HepG2 (cell line): ENCODE measurements at regions of chr11 and their contacts with region 1.

Region 1: GRCh38 chr11:8911029-8911826 is at the start of gene AKIP1:
- DNase-seq: peak; percentile 93
- ATAC-seq: peak; percentile 94
- H3K4me3 ChIP-seq: peak within 1 kb of the TSS; percentile 82 to 92 (median 91)
- H3K27ac ChIP-seq: peak within 1 kb of the TSS; percentile 81
- H3K4me1 ChIP-seq: peaks cover 44% of the 10 kb centered on the region
- H3K27me3 ChIP-seq: no peaks in the 10 kb centered on the region; a peak in 1 of 5 replicates
- CTCF ChIP-seq: peak; percentile 10; the same call in 1 of the 2 replicates
- EP300 ChIP-seq: no peak
- POLR2A ChIP-seq: peak; percentile 27 to 82; a peak in 2 of 4 replicates
- RAD21 ChIP-seq: no peak
- total RNA-seq, gene AKIP1: 20.3 and 21.6 TPM in 2 replicates

Region 2: DNA sequence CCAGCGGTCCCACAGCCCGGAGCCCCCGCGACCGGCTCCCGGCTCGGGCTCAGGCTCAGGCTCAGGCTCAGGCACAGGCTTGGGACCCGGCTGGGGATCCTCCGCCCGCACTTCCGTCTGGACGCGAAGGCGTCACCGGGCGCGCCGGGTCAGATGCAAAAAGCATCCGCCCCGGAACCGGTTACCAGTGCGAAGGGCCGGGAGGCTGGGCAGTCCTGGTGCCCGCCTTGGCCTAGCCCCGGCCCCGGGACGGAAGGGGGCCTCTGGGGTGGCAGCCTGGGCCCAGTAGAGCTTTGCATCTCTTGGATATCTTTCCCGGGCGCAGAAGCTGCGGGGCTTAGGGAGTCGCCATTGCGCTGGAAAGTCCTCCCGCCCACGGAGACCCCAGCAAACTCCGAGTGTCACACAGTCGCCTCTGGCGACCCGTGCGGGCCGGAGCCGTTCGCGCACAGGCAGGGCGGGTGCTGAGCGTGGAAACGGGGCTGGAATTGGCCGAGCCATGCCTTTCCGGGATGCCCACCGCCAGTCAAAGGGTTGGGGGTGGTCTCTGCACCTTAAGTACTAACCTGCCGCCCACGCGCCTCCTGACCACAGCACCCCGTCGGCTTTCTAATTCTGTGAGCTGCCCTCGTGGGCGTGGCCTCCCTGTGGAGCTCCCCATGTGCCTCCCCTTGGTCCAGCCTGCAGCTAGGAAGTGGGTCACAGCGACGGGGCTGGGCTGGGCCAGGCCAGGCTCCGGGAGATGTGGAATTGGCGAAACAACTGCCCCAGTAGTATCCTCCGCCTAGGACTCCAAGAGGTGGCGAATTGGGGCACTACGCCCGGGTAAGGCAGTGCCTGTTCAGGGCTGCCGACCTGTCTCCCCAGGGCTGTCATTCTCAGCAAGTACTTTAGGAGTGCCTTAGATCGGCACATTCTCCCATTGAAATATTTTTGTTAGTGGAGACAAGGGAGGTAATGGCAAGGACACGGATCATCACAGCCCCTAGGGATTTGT is 53.4 kb after region 1 on chr11 and contains the start of gene TMEM9B:
- CTCF ChIA-PET with region 1: interaction called, 19 read pairs
- POLR2A ChIA-PET with region 1: interaction called, 12 read pairs
- in situ Hi-C with region 1: no loop called
- intact Hi-C with region 1: loop called (anchors 1 kb)
- DNase-seq: peak; percentile 84
- ATAC-seq: peak; percentile 92
- H3K4me3 ChIP-seq: peak within 1 kb of the TSS; percentile 86 to 93 (median 89)
- H3K27ac ChIP-seq: peak within 1 kb of the TSS; percentile 88
- H3K4me1 ChIP-seq: peaks cover 19% of the 10 kb centered on the region
- H3K27me3 ChIP-seq: no peaks in the 10 kb centered on the region
- CTCF ChIP-seq: 0 out of 2 replicates have a peak, but pooled peaks have one; percentile 16
- EP300 ChIP-seq: no peak
- POLR2A ChIP-seq: peak; percentile 76 to 92
- RAD21 ChIP-seq: peak; percentile 46
- total RNA-seq, gene TMEM9B: 17.4 and 20.8 TPM in 2 replicates

Region 3: DNA sequence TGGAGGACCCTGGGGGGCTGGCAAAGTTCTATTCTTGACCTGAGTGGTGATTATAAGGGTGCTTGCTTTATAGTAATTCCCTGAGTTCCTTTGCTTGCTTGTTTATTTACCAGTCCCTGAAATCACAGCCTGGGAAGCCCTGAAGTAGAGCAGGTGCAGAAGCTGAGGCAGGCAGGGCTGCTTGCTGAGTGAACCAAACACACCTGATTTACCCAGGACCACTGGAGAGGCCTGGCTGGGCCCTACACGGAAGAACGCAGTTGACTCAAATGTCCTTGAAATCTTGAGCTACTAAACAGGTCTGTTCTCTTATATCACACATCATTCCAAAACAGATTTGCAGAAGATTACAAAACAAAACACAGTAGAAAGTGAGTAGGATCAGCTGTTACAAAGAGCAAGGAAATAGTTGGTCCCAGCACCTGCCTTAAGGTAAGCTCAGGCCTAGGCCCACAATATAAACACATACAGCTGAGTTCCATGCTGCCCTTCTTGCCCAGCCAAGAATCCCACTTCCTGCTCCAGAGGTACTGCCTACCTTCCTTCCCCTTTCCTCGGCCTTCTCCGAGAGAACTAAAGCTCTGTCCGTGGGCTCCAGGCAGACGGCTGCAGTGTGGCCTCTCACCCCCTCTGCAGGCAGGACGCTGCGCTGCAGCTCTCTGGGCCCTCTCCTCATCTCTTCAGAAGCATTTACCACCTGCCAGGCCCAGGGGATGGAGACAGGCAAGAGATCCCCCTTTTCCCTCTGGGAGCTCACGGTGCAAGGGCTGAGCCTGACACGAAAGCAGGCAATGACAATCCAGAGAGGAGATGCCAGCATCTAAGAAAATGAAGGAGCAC is 226.3 kb after region 1 on chr11:
- CTCF ChIA-PET with region 1: interaction called, 4 read pairs
- POLR2A ChIA-PET with region 1: no interaction called
- in situ Hi-C with region 1: loop called (anchors 10 kb)
- intact Hi-C with region 1: loop called (anchors 2 kb)
- DNase-seq: peak; percentile 39
- ATAC-seq: peak; percentile 97
- H3K4me3 ChIP-seq: no peak overlapping the region
- H3K27ac ChIP-seq: no peak overlapping the region
- H3K4me1 ChIP-seq: peaks cover 20% of the 10 kb centered on the region; the same call in 1 of the 2 replicates
- H3K27me3 ChIP-seq: no peaks in the 10 kb centered on the region
- CTCF ChIP-seq: peak; percentile 95
- EP300 ChIP-seq: no peak
- POLR2A ChIP-seq: no peak
- RAD21 ChIP-seq: peak; percentile 86